PC-3 (cell line): ENCODE measurements at regions of chr19 and their contacts with region 1.

Region 1: GRCh38 chr19:19053508-19054314 is 10.1 kb upstream of the SLC25A42 start:
- DNase-seq: peak; percentile 36
- ATAC-seq: peak; percentile 63
- H3K4me3 ChIP-seq: no peak overlapping the region
- H3K27ac ChIP-seq: no peak overlapping the region
- H3K4me1 ChIP-seq: no peaks in the 10 kb centered on the region
- H3K27me3 ChIP-seq: no peaks in the 10 kb centered on the region
- CTCF ChIP-seq: peak; percentile 81

Region 2: DNA sequence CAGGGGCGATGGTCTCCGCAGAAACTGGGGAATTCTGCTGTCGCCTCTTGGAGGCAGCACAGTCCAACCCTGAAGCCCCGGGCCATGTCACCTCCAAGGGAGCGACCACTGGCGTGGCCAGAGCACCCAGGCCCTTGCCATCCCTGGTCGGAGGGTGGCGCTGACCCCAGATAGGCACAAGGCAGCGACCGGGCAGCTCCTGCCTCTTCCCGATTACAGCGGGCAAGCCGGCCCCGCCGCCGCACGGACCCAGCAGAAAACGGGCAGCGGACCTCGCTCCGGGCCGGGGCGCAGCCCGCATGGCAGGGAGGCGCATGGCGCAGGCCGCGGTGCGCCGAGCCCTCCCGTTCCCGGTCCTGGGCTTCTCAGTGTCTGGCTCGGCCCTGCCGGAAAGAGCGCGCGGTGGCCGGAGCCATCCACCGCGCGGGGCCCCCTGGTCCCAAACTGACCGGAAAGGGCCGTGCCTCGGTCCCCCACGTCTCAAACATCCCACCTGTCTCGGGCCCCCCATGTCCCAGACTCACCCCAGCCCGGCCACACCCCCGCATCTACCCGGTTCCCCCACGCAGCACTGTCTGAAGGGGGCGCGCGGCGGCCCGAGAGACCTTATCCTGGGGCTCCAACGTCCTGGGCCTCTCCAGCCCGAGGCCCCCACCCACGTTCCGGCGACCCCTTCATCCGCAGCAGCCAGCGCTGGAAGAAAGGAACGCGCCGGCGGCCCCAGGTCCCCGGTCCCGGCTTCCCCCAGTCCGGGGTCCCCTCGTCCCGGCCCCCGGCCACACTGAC is 158.5 kb before region 1 on chr19:
- CTCF ChIA-PET with region 1: no interaction called
- POLR2A ChIA-PET with region 1: no interaction called
- intact Hi-C with region 1: no loop called
- DNase-seq: peak; percentile 53
- ATAC-seq: peak; percentile 71
- H3K4me3 ChIP-seq: peak overlapping the region; percentile 60
- H3K27ac ChIP-seq: no peak overlapping the region
- H3K4me1 ChIP-seq: no peaks in the 10 kb centered on the region
- H3K27me3 ChIP-seq: peaks cover 14% of the 10 kb centered on the region; the same call in 1 of the 2 replicates
- CTCF ChIP-seq: peak; percentile 58

Region 3: DNA sequence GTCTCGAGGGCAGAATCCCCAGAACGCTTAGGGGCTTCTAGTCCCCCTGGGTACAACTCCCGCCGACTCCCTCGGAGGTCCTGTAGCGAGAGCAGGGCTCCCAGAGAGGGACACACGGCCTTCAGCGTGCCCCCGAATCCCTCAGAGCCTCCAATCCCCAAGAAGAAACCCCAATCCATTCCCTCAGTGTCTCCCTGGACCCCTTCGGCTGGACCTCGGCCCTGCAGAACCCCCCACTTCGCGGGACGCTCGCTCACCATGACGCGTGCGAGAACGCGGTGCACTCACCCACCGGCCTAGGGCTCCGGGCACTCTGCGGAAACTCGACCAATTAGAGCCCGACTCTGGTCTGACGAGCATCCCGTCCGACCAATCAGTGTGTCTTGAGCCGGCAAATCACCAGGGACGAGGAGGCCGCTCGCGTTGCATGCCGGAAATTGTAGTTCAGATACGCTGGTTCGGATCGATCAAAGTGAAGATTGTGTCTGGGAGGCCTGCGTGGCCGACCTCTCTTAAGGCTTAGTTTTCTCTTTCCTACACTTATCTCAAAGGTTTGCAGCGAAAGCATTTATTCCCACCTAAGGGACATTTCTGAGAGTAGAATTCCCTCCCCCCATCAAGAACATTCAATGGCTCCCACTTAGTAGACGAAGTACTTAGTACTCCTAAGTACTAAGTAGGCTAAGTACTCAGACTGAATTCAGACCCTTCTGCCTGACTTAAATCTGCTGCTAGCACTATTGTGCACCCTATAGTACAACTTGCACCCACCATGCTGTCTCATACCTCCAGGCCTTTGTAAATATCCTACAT is 84.7 kb after region 1 on chr19 and contains the start of gene TMEM161A:
- CTCF ChIA-PET with region 1: no interaction called
- POLR2A ChIA-PET with region 1: no interaction called
- intact Hi-C with region 1: loop called (anchors 2 kb)
- DNase-seq: peak; percentile 98
- ATAC-seq: peak; percentile 100
- H3K4me3 ChIP-seq: peak within 1 kb of the TSS; percentile 85
- H3K27ac ChIP-seq: no peak within 1 kb of the TSS
- H3K4me1 ChIP-seq: peaks cover 11% of the 10 kb centered on the region; the same call in 1 of the 2 replicates
- H3K27me3 ChIP-seq: no peaks in the 10 kb centered on the region
- CTCF ChIP-seq: no peak
- total RNA-seq, gene TMEM161A: 49.9 and 90.0 TPM in 2 replicates